Endothelial cell of umbilical vein (primary cell): ENCODE measurements at regions of chrX and their contacts with region 1.

Region 1: DNA sequence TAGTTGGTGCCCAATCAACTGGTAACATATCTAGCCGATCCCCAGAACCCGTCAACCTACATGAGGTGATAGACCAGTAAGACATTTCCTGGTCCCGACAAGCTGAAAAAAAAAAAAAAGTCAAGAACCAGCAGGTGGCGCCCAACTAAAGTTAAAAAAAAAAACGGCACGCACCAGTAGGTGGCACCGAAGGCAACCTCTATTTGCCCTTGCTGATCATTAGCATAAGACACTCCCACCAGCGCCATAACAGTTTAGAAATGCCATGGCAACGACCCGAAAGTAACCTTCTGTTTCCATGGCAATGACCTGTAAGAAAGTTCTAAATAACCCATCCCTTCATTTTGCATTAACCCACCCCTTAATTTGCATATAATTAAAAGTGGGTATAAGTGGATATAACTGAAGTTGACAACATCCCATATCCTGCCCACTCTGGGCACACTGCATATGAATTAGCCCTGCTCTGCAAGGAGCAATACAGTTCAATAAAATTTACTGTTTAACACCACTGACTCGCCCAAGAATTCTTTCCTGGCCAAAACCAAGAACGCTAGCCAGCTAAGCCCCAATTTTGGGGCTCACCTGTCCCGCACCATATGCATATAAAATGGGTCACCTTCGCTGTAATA is 83.9 kb upstream of the SPANXB1 start:
- DNase-seq: peak; percentile 57
- H3K4me3 ChIP-seq: no peak overlapping the region
- H3K27ac ChIP-seq: peak overlapping the region; percentile 31
- H3K4me1 ChIP-seq: no peaks in the 10 kb centered on the region
- H3K27me3 ChIP-seq: no peaks in the 10 kb centered on the region
- CTCF ChIP-seq: peak; percentile 46 to 49
- POLR2A ChIP-seq: no peak

Region 2: DNA sequence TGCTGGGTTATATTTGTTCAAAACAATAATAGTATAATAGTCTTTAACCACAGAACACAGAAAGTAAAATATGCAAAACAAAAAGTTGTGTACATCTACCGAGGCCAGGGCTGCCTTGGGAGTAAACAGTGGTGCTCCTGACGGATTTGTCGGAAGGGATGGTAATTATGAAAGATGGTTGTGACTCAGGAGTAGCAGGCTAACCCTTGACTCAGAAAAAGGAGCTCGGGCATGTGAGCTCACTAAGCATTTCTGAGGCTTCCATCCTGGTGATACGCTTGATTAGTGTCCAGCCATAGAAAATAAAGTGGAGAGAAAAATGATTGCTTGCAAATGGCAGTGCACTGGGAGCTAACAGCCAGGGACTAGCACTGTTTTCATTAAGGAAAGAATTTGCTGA is 30.7 kb after region 1 on chrX:
- CTCF ChIA-PET with region 1: no interaction called
- POLR2A ChIA-PET with region 1: no interaction called
- dilution Hi-C with region 1: no loop called
- intact Hi-C with region 1: no loop called
- DNase-seq: no peak
- H3K4me3 ChIP-seq: no peak overlapping the region
- H3K27ac ChIP-seq: no peak overlapping the region
- H3K4me1 ChIP-seq: no peaks in the 10 kb centered on the region
- H3K27me3 ChIP-seq: no peaks in the 10 kb centered on the region
- CTCF ChIP-seq: no peak
- POLR2A ChIP-seq: no peak

Region 3: DNA sequence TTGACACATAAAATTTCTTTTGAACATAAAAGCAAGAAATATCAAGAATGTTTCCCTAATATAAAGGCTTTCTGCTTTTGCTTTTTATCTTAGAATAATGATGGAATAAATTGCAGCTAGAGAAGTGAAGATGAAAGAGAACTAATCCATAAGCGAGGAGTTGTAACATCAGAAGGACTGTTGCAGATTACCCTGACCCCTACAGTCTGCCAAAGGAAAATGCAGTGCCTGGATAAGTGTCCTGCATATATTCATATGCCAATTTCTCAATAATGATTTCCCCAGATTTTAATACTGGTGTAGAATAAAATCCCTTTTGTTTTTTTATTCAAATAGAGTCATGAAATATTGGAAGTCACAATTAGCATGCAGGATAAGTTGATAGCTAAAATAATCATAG is 1170.7 kb after region 1 on chrX:
- CTCF ChIA-PET with region 1: interaction called, 14 read pairs
- POLR2A ChIA-PET with region 1: no interaction called
- dilution Hi-C with region 1: no loop called
- intact Hi-C with region 1: loop called (anchors 1 kb)
- DNase-seq: peak; percentile 1
- H3K4me3 ChIP-seq: no peak overlapping the region
- H3K27ac ChIP-seq: no peak overlapping the region
- H3K4me1 ChIP-seq: no peaks in the 10 kb centered on the region
- H3K27me3 ChIP-seq: no peaks in the 10 kb centered on the region
- CTCF ChIP-seq: peak; percentile 11 to 17
- POLR2A ChIP-seq: no peak